Heart right ventricle (tissue), 16 donors: ENCODE measurements at regions of chr11 and their contacts with region 1.

Region 1: GRCh38 chr11:83007909-83008580 is 63.7 kb downstream of the RAB30 start:
- DNase-seq: peak; percentile 70 to 73
- ATAC-seq: peak; percentile 81 to 94 (median 91)
- H3K4me3 ChIP-seq: no peak overlapping the region
- H3K27ac ChIP-seq: peak overlapping the region in 9 of 10 donors; percentile 19 to 84 (median 61)
- H3K4me1 ChIP-seq: peaks cover 20 to 70% (median 50%) of the 10 kb centered on the region in 9 donors
- H3K27me3 ChIP-seq: no peaks in the 10 kb centered on the region
- CTCF ChIP-seq: peak in 3 of 9 donors; percentile 7 to 17 (median 14)

Region 2: DNA sequence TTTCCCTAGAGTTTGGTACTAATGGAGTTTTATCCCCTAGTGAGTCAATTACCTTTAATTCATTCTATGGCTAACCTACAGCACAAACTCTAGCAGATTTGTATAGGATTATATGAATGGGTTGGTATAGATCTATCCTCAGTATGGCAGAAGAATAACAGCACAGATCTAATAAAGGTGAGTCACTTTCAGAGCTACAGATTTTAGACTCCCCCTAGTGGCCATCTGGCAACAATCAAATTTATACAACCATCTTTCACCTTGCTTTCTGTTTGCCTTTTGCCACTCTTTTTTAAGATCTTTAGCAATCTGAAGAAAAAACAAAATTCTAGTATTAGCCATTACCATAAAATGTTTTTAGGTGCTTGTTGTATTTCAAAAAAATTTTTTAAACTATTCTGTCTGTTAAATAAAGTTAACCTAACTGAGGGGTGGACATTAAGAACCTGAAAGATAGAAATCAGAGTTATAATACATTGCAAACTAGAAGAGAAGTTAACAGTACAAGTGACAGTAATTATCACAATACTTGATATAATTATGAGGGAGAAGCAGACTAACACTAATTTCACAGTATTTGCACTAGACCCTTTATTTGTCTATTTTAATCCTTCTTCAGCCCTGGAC is 80.7 kb before region 1 on chr11:
- intact Hi-C with region 1: no loop called
- DNase-seq: peak in 1 of 2 donors; percentile 20
- ATAC-seq: peak in 2 of 8 donors; percentile 51 to 63
- H3K4me3 ChIP-seq: no peak overlapping the region
- H3K27ac ChIP-seq: no peak overlapping the region
- H3K4me1 ChIP-seq: peaks cover 0 to 12% (median 0%) of the 10 kb centered on the region in 9 donors
- H3K27me3 ChIP-seq: no peaks in the 10 kb centered on the region
- CTCF ChIP-seq: peak in 8 of 9 donors; percentile 68 to 89 (median 80)

Region 3: DNA sequence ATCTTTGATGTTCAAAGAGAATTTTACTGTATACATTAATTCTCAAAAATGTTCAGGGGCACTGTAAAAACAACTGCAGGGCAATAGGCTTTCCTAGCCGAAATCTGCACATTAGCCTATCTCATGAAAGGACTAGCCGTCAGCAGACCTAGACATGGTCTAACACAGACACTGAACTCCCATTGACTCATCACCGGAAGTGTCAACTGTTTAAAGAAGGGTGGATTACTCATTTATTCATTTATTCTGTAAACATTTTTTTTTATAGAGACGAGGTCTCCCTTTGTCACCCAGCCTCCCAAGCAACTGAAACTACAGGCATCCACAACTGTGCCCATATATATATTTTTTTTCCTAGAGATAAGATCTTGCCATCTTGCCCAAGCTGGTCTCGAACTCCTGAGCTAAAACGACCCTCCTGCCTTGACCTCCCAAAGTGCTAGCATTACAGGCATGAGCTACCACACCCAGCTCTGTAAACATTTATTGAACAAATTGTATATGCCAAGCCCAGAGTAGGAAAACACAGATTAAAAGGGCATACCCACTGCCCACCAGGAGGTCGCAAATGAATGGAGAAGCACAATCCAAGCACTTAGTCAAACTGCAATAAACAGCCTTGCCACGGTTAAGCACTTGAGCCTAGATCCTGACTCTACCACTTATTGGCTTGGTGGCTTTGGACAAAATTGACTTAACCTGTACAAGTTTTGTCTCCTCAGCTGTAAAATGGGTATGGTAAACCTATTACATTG is 37.1 kb after region 1 on chr11:
- intact Hi-C with region 1: loop called in 2 of 10 experiments (anchors 5 kb)
- DNase-seq: no peak
- ATAC-seq: no peak
- H3K4me3 ChIP-seq: no peak overlapping the region
- H3K27ac ChIP-seq: peak overlapping the region in 3 of 10 donors; percentile 21 to 78 (median 40)
- H3K4me1 ChIP-seq: peaks cover 0 to 71% (median 40%) of the 10 kb centered on the region in 9 donors
- H3K27me3 ChIP-seq: no peaks in the 10 kb centered on the region
- CTCF ChIP-seq: no peak

Region 4: GRCh38 chr11:83051760-83052671 is 44.0 kb after region 1 on chr11:
- intact Hi-C with region 1: loop called in 2 of 10 experiments (anchors 5 kb)
- DNase-seq: peak; percentile 42 to 49
- ATAC-seq: peak; percentile 36 to 76 (median 72)
- H3K4me3 ChIP-seq: no peak overlapping the region
- H3K27ac ChIP-seq: peak overlapping the region; percentile 1 to 81 (median 64)
- H3K4me1 ChIP-seq: peaks cover 6 to 74% (median 54%) of the 10 kb centered on the region in 9 donors
- H3K27me3 ChIP-seq: no peaks in the 10 kb centered on the region
- CTCF ChIP-seq: no peak